Activated T-helper 2 cell treated with anti-CD3 and anti-CD28 coated beads, Interferon-gamma antibody, Interleukin-2, Interleukin-4, amounts not matched to agents 10 μg/mL and 5 μg/mL and 100 μg/mL, durations not matched to agents 14 hours and 24 hours and 36 hours (primary cell): ENCODE measurements at regions of chr5 and their contacts with region 1.

Region 1: DNA sequence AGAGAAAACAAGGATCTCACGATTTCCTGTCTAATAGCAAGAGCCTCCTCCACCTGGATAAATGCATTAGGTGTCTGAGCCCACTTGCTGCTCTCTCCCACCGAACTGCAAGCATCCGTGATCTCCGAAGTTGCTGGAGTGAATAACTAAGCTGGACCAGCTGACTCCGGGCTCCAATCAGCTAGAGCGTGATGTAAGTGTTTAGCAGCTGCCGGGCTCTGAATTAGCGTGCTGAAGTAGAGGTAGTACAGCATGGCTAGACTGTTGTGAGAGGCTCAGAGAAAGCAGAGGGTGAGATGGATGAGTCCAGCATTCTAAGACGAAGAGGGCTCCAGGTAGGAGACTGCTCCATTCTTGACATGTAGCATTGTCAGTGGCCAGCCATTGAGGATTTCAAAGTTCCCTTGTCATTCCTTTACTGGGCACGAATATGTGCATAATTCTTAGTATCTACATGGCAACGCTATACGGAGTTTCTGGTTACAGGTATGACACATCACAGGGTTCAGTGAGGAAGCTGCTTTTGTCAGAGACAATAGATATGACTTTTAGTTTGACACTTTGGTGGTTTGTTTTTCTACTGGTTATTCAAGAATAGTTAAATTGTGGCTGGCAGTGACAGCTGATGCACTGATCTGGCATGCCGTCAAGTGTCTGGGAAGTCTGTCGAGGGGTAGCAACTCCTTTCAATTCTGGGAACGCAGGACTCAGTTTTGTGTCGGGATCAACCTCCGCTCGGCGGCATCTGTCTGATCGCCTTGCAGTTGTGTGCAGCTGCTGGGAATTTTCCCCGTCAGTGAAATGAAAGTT is 232.6 kb downstream of the MAST4 start:
- DNase-seq: peak; percentile 61
- H3K4me3 Mint-ChIP-seq: peak overlapping the region; percentile 88
- H3K27ac Mint-ChIP-seq: peak overlapping the region; percentile 86
- H3K4me1 Mint-ChIP-seq: peaks cover 41% of the 10 kb centered on the region
- H3K27me3 Mint-ChIP-seq: peaks cover 13% of the 10 kb centered on the region

Region 2: DNA sequence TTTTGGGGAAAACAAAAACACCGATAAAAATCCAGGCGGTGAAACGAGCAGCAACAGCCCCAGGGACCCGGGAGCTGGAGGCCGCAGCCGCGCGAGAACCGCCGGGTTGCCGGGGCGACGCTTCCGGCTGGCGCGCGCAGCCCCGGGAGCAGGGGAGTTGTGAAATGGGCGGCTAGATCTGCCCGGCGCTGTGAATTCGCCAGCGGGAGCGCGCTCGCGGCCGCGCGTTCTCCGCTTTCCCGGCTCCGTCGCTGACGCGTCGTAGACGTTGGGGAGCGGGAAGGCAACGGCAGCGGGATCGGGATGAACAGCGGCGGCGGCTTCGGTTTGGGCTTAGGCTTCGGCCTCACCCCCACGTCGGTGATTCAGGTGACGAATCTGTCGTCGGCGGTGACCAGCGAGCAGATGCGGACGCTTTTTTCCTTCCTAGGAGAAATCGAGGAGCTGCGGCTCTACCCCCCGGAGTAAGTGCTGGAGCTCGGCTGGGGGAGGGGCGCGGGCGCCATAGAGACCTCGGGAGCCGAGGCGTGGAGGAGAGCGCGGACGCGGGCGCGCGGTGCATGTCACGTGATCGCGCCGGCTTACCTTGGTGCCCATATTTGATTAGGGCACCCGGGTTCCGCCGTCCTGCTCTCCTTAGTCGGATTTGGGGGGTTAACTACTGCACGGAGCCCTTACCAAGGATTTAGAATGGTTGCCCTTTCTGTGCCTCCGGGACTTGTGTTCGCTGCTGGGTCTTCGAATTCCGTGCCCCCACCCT is 684.5 kb before region 1 on chr5 and contains the start of gene SREK1:
- intact Hi-C with region 1: loop called (anchors 10 kb)
- DNase-seq: peak; percentile 85
- H3K4me3 Mint-ChIP-seq: peak within 1 kb of the TSS; percentile 92
- H3K27ac Mint-ChIP-seq: peak within 1 kb of the TSS; percentile 99
- H3K4me1 Mint-ChIP-seq: peaks cover 37% of the 10 kb centered on the region
- H3K27me3 Mint-ChIP-seq: no peaks in the 10 kb centered on the region
- total RNA-seq, gene SREK1: 67.8 and 69.9 TPM in 2 replicates

Region 3: DNA sequence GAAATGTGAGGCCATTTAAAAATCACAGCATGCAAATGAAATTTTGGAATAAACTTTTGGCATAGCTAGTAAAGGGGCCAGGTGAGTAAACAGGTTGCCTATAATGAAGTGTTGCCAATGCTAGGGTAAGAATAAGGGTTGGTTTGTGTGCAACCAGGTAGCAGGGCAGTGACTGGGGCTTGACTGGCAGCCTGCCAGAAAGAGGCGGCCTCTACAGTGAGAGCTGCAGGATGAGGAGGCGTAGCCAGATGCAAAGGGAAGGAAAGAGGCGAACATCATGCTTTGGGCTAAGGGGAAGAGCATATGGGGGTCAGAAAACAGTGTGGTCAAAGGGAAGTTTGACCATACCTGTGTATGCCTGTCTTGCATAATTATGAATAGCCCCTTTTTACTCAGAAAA is 162.0 kb before region 1 on chr5:
- intact Hi-C with region 1: no loop called
- DNase-seq: no peak
- H3K4me3 Mint-ChIP-seq: no peak overlapping the region
- H3K27ac Mint-ChIP-seq: no peak overlapping the region
- H3K4me1 Mint-ChIP-seq: no peaks in the 10 kb centered on the region
- H3K27me3 Mint-ChIP-seq: peaks cover 16% of the 10 kb centered on the region

Region 4: DNA sequence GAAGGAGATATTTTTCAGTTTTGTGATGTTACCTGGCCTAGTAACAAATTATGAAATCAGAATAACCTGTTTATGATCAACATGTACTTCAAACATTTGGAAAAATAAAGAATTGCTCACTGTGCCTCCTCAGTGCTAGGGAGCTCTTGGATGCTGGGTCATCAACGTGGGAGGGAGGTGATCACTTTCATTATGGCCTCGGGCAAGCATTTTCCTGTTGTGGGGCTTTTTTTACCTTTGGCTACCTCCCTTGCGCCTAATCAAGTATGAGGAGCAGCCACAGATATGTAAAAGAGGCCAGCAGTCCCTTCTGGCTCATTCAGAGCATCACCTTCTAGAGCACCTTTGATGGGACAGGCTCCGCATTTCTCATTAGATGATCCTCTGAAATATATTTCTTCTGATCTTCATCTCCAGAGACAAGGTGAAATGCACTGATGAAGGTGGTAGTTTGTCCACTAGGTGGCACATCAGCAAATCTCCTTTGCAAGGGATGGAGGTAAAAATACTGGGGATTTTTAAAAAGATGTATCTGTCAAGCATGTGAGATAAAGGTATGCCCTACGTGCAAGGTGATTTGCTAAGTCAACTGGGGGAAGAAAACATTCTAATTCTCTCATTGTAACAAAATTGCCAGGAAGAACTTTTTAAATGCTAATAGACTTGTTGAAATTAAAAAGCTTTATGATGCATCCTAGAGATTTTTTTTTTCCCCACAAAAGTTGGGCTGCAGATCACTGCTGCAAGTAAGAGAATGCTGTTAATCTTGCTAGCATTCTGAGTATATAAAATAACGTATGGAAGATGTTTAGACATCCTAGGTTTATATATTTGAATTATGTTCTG is 14.4 kb before region 1 on chr5:
- intact Hi-C with region 1: loop called (anchors 1 kb)
- DNase-seq: no peak
- H3K4me3 Mint-ChIP-seq: no peak overlapping the region
- H3K27ac Mint-ChIP-seq: no peak overlapping the region
- H3K4me1 Mint-ChIP-seq: peaks cover 8% of the 10 kb centered on the region
- H3K27me3 Mint-ChIP-seq: peaks cover 36% of the 10 kb centered on the region

Region 5: DNA sequence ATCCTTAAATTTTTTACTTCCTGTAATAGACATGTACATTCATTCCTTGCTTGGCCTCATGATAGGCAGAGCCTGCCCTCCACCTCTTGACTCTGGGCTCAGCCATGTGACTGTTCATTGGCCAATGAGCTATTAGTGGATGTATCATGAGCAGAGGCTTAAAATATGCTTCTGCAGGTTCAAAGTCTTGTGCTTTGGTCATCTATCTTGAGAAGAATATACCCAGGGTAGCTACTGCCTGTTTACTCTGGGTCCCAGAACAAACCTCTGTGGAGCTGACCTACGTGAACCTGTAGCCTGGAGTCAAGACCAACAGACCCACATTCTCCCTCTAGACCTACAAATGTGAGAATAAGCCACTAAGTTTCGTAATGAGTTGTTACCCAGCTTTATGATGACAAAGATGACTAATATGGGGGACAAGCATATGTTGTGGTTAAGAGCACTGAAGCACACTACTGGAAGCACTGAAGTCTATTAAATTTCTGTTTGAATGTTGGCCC is 11.8 kb after region 1 on chr5:
- intact Hi-C with region 1: loop called (anchors 1 kb)
- DNase-seq: peak; percentile 46
- H3K4me3 Mint-ChIP-seq: peak overlapping the region; percentile 26
- H3K27ac Mint-ChIP-seq: peak overlapping the region; percentile 79
- H3K4me1 Mint-ChIP-seq: peaks cover 57% of the 10 kb centered on the region
- H3K27me3 Mint-ChIP-seq: no peaks in the 10 kb centered on the region

Region 6: DNA sequence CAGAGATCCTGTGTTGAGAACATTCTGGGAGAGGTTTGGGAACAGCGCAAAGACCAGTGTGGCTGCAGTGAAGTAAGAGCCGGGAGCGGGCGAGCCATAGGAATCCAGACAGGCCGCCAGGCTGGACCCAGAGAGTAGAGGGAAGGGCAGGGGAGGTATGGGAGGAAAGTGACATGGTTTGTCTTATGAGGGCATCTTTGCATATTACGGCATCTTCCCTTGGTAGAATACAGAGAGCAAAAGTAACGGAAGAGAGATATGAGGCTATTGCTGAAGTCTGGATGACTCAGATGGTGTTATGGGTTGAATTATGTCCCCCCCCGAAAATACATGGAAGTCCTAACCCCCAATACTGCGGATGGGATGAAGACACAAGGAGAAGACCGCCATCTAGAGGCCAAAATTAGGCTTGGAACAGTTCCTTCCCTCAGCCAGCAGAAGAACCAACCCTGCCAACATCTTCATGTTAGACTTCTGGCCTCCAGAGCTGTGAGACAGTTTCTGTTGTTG is 35.6 kb after region 1 on chr5:
- intact Hi-C with region 1: loop called (anchors 5 kb)
- DNase-seq: no peak
- H3K4me3 Mint-ChIP-seq: no peak overlapping the region
- H3K27ac Mint-ChIP-seq: no peak overlapping the region
- H3K4me1 Mint-ChIP-seq: peaks cover 16% of the 10 kb centered on the region
- H3K27me3 Mint-ChIP-seq: peaks cover 44% of the 10 kb centered on the region

Region 7: GRCh38 chr5:66987949-66988838 is 159.4 kb after region 1 on chr5:
- intact Hi-C with region 1: no loop called
- DNase-seq: no peak
- H3K4me3 Mint-ChIP-seq: no peak overlapping the region
- H3K27ac Mint-ChIP-seq: no peak overlapping the region
- H3K4me1 Mint-ChIP-seq: peaks cover 8% of the 10 kb centered on the region
- H3K27me3 Mint-ChIP-seq: peaks cover 19% of the 10 kb centered on the region

Region 8: GRCh38 chr5:67165526-67166459 is 337.0 kb after region 1 on chr5:
- intact Hi-C with region 1: loop called (anchors 5 kb)
- DNase-seq: peak; percentile 82
- H3K4me3 Mint-ChIP-seq: peak overlapping the region; percentile 84
- H3K27ac Mint-ChIP-seq: peak overlapping the region; percentile 93
- H3K4me1 Mint-ChIP-seq: peaks cover 49% of the 10 kb centered on the region
- H3K27me3 Mint-ChIP-seq: no peaks in the 10 kb centered on the region

Region 9: GRCh38 chr5:67215583-67216471 is 387.1 kb after region 1 on chr5:
- intact Hi-C with region 1: loop called (anchors 1 kb)
- DNase-seq: peak; percentile 75
- H3K4me3 Mint-ChIP-seq: peak overlapping the region; percentile 73
- H3K27ac Mint-ChIP-seq: peak overlapping the region; percentile 97
- H3K4me1 Mint-ChIP-seq: peaks cover 55% of the 10 kb centered on the region
- H3K27me3 Mint-ChIP-seq: no peaks in the 10 kb centered on the region